Endothelial cell of umbilical vein (primary cell): ENCODE measurements at regions of chr9 and their contacts with region 1.

Region 1: DNA sequence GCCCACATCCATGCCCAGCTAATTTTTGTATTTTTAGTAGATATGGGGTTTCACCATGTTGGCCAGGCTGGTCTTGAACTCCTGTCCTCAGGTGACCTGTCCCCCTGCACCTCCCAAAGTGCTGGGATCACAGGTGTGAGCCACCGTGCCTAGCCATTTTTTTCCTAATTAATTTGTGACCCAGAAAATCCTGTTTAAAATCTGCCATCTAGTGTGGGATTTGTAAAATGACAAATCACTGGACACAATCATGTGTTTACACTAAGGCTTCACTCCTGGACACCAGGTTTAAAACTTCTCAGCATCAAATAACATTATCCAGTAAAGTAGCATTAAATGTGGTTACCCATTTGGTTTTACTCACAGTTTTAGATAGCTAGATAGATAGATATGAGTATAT is 18.6 kb upstream of the KDM4C start:
- DNase-seq: peak; percentile 28
- H3K4me3 ChIP-seq: no peak overlapping the region
- H3K27ac ChIP-seq: no peak overlapping the region
- H3K4me1 ChIP-seq: no peaks in the 10 kb centered on the region
- H3K27me3 ChIP-seq: no peaks in the 10 kb centered on the region
- CTCF ChIP-seq: peak; percentile 16 to 25
- POLR2A ChIP-seq: no peak

Region 2: DNA sequence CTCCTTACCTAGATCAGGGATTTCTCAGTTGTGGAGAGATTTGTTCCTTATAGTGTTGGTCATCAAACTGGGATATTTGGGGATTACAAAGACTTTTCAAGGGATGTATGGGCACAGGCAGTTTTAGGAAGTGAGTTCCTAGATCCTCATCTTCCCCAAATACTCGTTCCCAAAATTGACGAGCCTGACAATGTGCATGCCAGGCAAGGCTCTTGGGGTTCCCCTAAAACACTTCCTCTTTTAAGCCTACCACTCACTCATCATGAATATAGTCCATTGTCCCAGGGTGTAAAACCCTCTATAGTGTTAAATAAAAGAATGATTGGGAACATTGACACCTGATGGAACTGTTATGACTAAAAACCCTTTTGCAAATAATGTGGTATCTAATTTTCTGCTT is 1202.5 kb before region 1 on chr9:
- CTCF ChIA-PET with region 1: no interaction called
- POLR2A ChIA-PET with region 1: no interaction called
- dilution Hi-C with region 1: no loop called
- intact Hi-C with region 1: no loop called
- DNase-seq: no peak
- H3K4me3 ChIP-seq: no peak overlapping the region
- H3K27ac ChIP-seq: no peak overlapping the region
- H3K4me1 ChIP-seq: peaks cover 23% of the 10 kb centered on the region
- H3K27me3 ChIP-seq: no peaks in the 10 kb centered on the region
- CTCF ChIP-seq: no peak
- POLR2A ChIP-seq: no peak

Region 3: DNA sequence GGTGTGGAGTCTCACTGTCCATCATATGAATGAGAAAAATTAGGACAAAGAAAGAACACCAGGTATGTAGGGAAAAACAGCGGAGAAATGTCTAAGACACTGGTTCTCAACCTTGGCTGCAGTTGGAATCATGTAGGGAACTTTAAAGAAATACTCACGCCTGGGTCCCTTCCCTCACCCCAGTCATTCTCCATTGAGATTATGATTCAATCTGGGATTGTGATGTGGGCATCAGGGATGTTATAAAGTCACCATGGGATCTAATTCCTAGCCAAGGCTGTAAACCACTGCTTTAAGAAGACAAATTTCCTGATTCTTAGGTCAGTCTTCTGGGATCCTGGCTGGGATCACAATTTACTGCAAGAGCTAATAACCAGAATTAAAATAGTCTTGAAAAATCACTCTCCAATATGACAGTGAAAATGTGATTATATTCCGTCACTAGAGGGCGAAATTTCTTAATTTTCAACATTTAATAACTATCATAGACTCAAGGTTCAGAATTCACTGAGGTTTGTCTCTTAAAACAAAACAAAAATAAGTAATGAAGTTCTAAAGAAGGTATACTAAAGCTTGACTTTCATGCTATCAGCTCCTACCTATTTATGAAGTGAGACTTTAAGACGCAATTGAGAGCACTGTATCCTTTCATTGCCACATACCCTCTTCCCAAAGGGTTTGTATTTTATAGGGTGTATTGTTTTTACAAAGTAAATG is 154.2 kb before region 1 on chr9:
- CTCF ChIA-PET with region 1: interaction called, 38 read pairs
- POLR2A ChIA-PET with region 1: no interaction called
- dilution Hi-C with region 1: no loop called
- intact Hi-C with region 1: loop called (anchors 1 kb)
- DNase-seq: peak; percentile 58
- H3K4me3 ChIP-seq: no peak overlapping the region
- H3K27ac ChIP-seq: no peak overlapping the region
- H3K4me1 ChIP-seq: no peaks in the 10 kb centered on the region
- H3K27me3 ChIP-seq: peaks cover 0 to 2% of the 10 kb centered on the region in 2 experiments
- CTCF ChIP-seq: peak; percentile 16 to 23
- POLR2A ChIP-seq: no peak

Region 4: DNA sequence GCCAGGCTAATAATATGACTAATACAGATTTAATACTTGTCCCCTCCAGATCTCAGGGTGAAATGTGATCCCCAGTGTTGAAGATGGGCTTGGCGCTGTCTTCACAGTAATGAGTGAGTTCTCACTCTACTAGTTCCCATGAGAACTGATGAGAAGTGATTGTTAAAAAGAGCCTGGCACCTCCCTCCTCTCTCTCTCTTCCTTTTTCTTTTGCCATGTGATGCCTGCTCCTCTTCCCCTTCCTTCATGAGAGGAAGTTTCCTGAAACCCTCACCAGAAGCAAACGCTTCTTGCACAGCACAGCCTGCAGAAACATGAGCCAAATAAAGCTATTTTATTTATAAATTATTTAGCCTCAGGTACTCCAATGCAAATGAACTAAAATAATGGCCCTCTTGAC is 148.9 kb before region 1 on chr9:
- CTCF ChIA-PET with region 1: interaction called, 38 read pairs
- POLR2A ChIA-PET with region 1: no interaction called
- dilution Hi-C with region 1: no loop called
- intact Hi-C with region 1: loop called (anchors 1 kb)
- DNase-seq: no peak
- H3K4me3 ChIP-seq: no peak overlapping the region
- H3K27ac ChIP-seq: no peak overlapping the region
- H3K4me1 ChIP-seq: no peaks in the 10 kb centered on the region
- H3K27me3 ChIP-seq: peaks cover 0 to 2% of the 10 kb centered on the region in 2 experiments
- CTCF ChIP-seq: no peak
- POLR2A ChIP-seq: no peak

Region 5: GRCh38 chr9:6703898-6704639 is 35.1 kb before region 1 on chr9:
- CTCF ChIA-PET with region 1: interaction called, 13 read pairs
- POLR2A ChIA-PET with region 1: no interaction called
- dilution Hi-C with region 1: no loop called
- intact Hi-C with region 1: no loop called
- DNase-seq: peak; percentile 86
- H3K4me3 ChIP-seq: peak overlapping the region; percentile 21 to 61 (median 53)
- H3K27ac ChIP-seq: peak overlapping the region; percentile 16
- H3K4me1 ChIP-seq: peaks cover 5% of the 10 kb centered on the region
- H3K27me3 ChIP-seq: no peaks in the 10 kb centered on the region
- CTCF ChIP-seq: no peak
- POLR2A ChIP-seq: peak; percentile 79